ENCODE measurements at regions of chr3 and their contacts with region 1.

Region 1: DNA sequence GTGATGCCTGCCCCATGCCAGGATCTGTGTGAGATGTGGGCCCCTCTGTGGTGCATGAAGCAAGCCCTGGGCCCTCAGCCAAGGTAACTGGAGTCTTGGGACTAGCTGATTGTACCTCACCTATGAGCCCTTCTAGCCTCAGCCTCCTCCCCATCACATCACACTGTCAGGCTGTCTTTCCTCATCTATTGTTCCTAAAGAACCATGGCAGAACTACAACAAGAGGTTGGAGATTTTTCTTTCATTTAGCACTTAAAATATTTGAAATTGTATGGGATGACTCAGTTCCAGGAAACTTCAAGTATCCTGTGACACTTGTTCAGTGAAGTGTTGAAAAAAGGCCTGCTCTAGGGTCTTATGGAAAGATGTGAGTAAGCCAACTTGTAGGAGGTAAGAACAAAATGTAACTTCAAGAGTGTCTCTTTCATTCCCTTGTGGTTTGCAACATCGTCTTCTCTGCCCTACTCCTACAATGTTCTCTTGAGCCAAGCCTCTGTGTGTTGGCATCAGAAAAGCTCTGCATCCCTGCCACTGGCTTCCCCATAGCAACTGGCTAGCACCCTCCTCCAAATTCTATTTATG is 58.7 kb upstream of the TIPARP start:
- DNase-seq: peak; percentile 82
- H3K4me3 ChIP-seq: no peak overlapping the region
- H3K27ac ChIP-seq: peak overlapping the region; percentile 99
- H3K4me1 ChIP-seq: peaks cover 72% of the 10 kb centered on the region
- H3K27me3 ChIP-seq: no peaks in the 10 kb centered on the region
- CTCF ChIP-seq: no peak

Region 2: DNA sequence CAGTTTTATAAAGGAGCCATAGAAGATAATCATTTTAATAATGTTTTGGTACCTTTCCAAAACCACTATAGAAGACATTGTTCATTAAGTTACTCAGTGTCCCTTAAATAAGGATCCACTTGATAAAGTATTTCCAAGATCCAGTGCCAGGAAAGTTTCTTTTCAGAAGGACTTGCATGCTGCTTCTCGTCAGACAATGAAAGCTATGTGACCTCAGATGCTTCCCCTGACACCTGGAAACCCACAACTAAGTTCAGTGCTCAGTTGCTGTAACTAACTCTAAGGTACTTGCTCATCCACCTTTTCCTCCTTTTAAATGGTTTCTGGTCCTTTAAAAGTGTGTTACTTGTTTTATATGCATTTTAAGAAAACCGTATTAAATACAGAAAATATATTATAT is 68.0 kb before region 1 on chr3:
- CTCF ChIA-PET with region 1: no interaction called
- POLR2A ChIA-PET with region 1: interaction called, 3 read pairs
- intact Hi-C with region 1: loop called (anchors 1 kb)
- DNase-seq: no peak
- H3K4me3 ChIP-seq: no peak overlapping the region
- H3K27ac ChIP-seq: peak overlapping the region; percentile 88
- H3K4me1 ChIP-seq: peaks cover 94% of the 10 kb centered on the region
- H3K27me3 ChIP-seq: no peaks in the 10 kb centered on the region
- CTCF ChIP-seq: no peak

Region 3: DNA sequence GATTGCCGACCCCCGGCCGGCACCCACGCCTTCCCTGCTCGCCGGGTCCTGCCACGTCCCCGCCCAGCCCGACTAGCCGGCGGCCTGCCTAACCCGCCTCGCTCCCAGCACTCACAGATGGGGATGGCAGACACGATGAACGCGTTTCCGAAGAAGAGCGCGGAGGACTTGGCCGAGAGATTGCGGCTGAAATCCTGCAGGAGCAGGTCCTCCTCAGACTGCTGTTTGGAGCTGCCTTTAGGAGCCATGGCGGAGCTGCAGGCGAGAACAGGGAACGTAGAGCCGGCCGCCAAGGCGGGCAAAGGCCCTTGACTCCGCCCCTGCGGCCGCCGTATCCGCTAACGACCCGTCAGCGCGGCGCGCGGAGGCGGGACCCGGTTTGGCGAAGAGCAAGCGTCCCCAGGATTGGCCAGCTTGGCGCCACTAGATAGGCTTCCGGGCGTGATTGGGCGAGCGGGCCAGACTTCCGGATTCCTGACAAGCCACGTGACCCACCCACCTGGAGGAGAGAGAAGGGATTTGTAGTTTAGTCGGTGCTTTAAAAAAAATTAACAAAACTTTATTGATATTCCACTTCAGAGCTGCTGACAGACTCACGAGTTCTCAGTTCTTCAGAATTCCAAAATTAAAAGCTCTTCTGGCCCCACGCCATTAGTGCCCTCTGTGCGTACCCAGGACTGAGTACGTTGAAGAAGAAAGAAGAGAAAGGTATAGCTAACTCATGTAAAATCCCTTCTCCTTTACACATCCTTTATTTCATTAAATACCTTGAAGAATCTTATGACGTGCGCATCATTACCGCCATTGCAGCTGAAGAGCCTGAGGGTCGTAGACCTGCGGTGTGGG is 60.6 kb before region 1 on chr3 and contains the start of gene SSR3:
- CTCF ChIA-PET with region 1: no interaction called
- POLR2A ChIA-PET with region 1: interaction called, 11 read pairs
- intact Hi-C with region 1: loop called (anchors 2 kb)
- DNase-seq: peak; percentile 100
- H3K4me3 ChIP-seq: peak within 1 kb of the TSS; percentile 93
- H3K27ac ChIP-seq: peak within 1 kb of the TSS; percentile 91
- H3K4me1 ChIP-seq: peaks cover 44% of the 10 kb centered on the region
- H3K27me3 ChIP-seq: no peaks in the 10 kb centered on the region
- CTCF ChIP-seq: no peak
- total RNA-seq, gene SSR3: 431 and 531 TPM in 2 replicates

Region 4: GRCh38 chr3:156674046-156674910 is 58.6 kb after region 1 on chr3 and contains the start of gene TIPARP:
- CTCF ChIA-PET with region 1: interaction called, 3 read pairs
- POLR2A ChIA-PET with region 1: interaction called, 6 read pairs
- intact Hi-C with region 1: loop called (anchors 2 kb)
- DNase-seq: peak; percentile 99
- H3K4me3 ChIP-seq: peak within 1 kb of the TSS; percentile 89
- H3K27ac ChIP-seq: peak within 1 kb of the TSS; percentile 97
- H3K4me1 ChIP-seq: peaks cover 18% of the 10 kb centered on the region
- H3K27me3 ChIP-seq: no peaks in the 10 kb centered on the region
- CTCF ChIP-seq: peak; percentile 63
- total RNA-seq, gene TIPARP: 116 TPM in 2 replicates

Region 5: GRCh38 chr3:156826144-156826895 is 210.6 kb after region 1 on chr3 and contains the start of gene LEKR1:
- CTCF ChIA-PET with region 1: no interaction called
- POLR2A ChIA-PET with region 1: no interaction called
- intact Hi-C with region 1: loop called (anchors 5 kb)
- DNase-seq: peak; percentile 92
- H3K4me3 ChIP-seq: peak within 1 kb of the TSS; percentile 59
- H3K27ac ChIP-seq: peak within 1 kb of the TSS; percentile 92
- H3K4me1 ChIP-seq: peaks cover 39% of the 10 kb centered on the region
- H3K27me3 ChIP-seq: no peaks in the 10 kb centered on the region
- CTCF ChIP-seq: no peak
- total RNA-seq, gene LEKR1: 0.76 and 0.90 TPM in 2 replicates

Region 6: GRCh38 chr3:157081681-157082210 is 466.1 kb after region 1 on chr3:
- CTCF ChIA-PET with region 1: no interaction called
- POLR2A ChIA-PET with region 1: interaction called, 6 read pairs
- intact Hi-C with region 1: loop called (anchors 2 kb)
- DNase-seq: peak; percentile 97
- H3K4me3 ChIP-seq: no peak overlapping the region
- H3K27ac ChIP-seq: peak overlapping the region; percentile 62
- H3K4me1 ChIP-seq: peaks cover 45% of the 10 kb centered on the region
- H3K27me3 ChIP-seq: no peaks in the 10 kb centered on the region
- CTCF ChIP-seq: peak; percentile 97

Region 7: GRCh38 chr3:157130467-157131251 is 515.0 kb after region 1 on chr3:
- CTCF ChIA-PET with region 1: no interaction called
- POLR2A ChIA-PET with region 1: no interaction called
- intact Hi-C with region 1: loop called (anchors 5 kb)
- DNase-seq: peak; percentile 82
- H3K4me3 ChIP-seq: peak overlapping the region; percentile 7
- H3K27ac ChIP-seq: peak overlapping the region; percentile 75
- H3K4me1 ChIP-seq: peaks cover 46% of the 10 kb centered on the region
- H3K27me3 ChIP-seq: no peaks in the 10 kb centered on the region
- CTCF ChIP-seq: peak; percentile 84

Measured in A673 (cell line).